CD4-positive, alpha-beta memory T cell (primary cell): ENCODE measurements at regions of chr3 and their contacts with region 1.

Region 1: GRCh38 chr3:115783938-115784738 is 160.8 kb downstream of the GAP43 start:
- DNase-seq: peak; percentile 91 to 96 (median 93)
- H3K4me3 ChIP-seq: peak overlapping the region in 1 of 2 donors; percentile 81
- H3K4me3 Mint-ChIP-seq: peak overlapping the region; percentile 78 to 96 (median 93)
- H3K27ac ChIP-seq: peak overlapping the region; percentile 90
- H3K27ac Mint-ChIP-seq: peak overlapping the region; percentile 76 to 99 (median 98)
- H3K4me1 ChIP-seq: peaks cover 13% of the 10 kb centered on the region
- H3K4me1 Mint-ChIP-seq: peaks cover 10 to 19% (median 10%) of the 10 kb centered on the region in 4 donors
- H3K27me3 ChIP-seq: no peaks in the 10 kb centered on the region
- H3K27me3 Mint-ChIP-seq: no peaks in the 10 kb centered on the region

Region 2: DNA sequence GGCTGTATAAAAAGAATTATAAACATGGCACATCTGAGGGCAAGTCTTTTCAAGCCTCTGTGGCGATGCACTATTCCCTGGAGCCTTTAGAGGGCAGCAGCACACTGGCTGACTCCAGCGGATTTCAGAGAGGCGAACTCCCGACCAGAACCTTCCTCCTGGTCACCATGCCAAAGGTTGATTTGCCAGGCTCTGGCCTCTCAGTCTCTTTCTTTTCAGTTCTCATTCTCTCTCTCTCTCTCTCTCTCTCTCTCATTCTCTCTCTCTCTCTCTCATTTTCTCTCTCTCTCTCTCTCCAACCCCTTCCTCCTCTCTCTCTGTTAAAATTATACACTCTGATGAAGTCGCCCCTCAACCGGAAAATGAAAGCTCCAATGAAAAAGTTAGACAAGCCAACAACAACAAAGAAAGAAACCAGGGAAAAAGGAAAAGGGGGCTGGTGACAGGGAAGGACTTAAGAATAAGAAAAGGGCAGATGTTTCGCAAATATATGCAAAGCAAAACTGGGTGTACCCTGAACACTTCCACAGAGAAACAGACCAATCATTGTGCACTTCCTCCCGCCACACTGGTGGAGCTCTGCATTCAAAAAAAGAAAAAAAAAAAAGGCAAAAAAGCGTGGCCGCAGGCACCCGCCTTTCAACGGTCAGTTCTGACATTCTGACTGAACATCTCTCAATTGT is 1400.1 kb before region 1 on chr3:
- CTCF ChIA-PET with region 1: no interaction called
- POLR2A ChIA-PET with region 1: no interaction called
- intact Hi-C with region 1: loop called (anchors 5 kb)
- DNase-seq: peak; percentile 39 to 50 (median 47)
- H3K4me3 ChIP-seq: peak overlapping the region in 1 of 2 donors; percentile 33
- H3K4me3 Mint-ChIP-seq: peak overlapping the region in 7 of 8 donors; percentile 74 to 89 (median 85)
- H3K27ac ChIP-seq: no peak overlapping the region
- H3K27ac Mint-ChIP-seq: peak overlapping the region in 5 of 7 donors; percentile 38 to 76 (median 61)
- H3K4me1 ChIP-seq: peaks cover 16% of the 10 kb centered on the region
- H3K4me1 Mint-ChIP-seq: peaks cover 8 to 15% (median 12%) of the 10 kb centered on the region in 4 donors
- H3K27me3 ChIP-seq: no peaks in the 10 kb centered on the region
- H3K27me3 Mint-ChIP-seq: no peaks in the 10 kb centered on the region

Region 3: GRCh38 chr3:115169808-115170207 is 614.3 kb before region 1 on chr3:
- CTCF ChIA-PET with region 1: interaction called, 17 read pairs
- POLR2A ChIA-PET with region 1: interaction called, 14 read pairs
- intact Hi-C with region 1: no loop called
- DNase-seq: peak in 4 of 5 donors; percentile 16 to 40 (median 27)
- H3K4me3 ChIP-seq: no peak overlapping the region
- H3K4me3 Mint-ChIP-seq: no peak overlapping the region
- H3K27ac ChIP-seq: no peak overlapping the region
- H3K27ac Mint-ChIP-seq: no peak overlapping the region
- H3K4me1 ChIP-seq: peaks cover 14% of the 10 kb centered on the region
- H3K4me1 Mint-ChIP-seq: peaks cover 12 to 13% (median 12%) of the 10 kb centered on the region in 4 donors
- H3K27me3 ChIP-seq: no peaks in the 10 kb centered on the region
- H3K27me3 Mint-ChIP-seq: no peaks in the 10 kb centered on the region

Region 4: DNA sequence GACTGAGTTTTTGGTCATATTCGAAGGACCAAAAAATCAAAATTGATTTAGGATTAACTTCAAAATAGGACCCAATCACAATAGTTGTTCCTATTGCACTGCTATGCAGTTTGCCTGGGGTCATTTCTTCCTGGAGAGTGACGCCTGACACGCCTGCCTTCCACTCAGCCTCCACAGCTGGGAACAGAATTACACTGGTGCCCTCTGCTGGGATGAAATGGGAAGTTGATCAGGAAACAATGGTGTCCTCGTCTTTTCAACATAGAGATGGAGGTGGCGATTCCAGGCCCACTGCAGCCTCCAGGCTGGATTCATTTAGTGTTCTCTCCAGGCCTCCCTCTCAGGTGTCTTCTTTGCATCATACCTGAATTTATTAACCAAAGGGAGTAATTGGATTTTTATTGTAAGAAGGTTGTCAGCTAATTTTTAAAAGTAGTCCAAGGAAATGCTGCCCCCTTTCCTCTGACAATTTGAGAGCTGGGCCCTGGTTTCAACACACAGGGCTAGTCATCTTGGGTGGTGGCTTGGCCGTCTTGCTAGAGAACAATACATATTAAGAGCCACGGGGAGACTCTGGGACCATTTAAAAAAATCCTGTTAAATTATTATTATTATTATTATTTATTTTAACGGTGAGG is 91.1 kb before region 1 on chr3:
- CTCF ChIA-PET with region 1: interaction called, 8 read pairs
- POLR2A ChIA-PET with region 1: no interaction called
- intact Hi-C with region 1: loop called (anchors 1 kb)
- DNase-seq: peak; percentile 51 to 68 (median 56)
- H3K4me3 ChIP-seq: no peak overlapping the region
- H3K4me3 Mint-ChIP-seq: no peak overlapping the region
- H3K27ac ChIP-seq: no peak overlapping the region
- H3K27ac Mint-ChIP-seq: peak overlapping the region in 1 of 7 donors; percentile 27
- H3K4me1 ChIP-seq: no peaks in the 10 kb centered on the region
- H3K4me1 Mint-ChIP-seq: peaks cover 0 to 3% (median 0%) of the 10 kb centered on the region in 4 donors
- H3K27me3 ChIP-seq: no peaks in the 10 kb centered on the region
- H3K27me3 Mint-ChIP-seq: no peaks in the 10 kb centered on the region

Region 5: GRCh38 chr3:115814778-115815380 is 30.7 kb after region 1 on chr3:
- CTCF ChIA-PET with region 1: interaction called, 11 read pairs
- POLR2A ChIA-PET with region 1: interaction called, 5 read pairs
- intact Hi-C with region 1: loop called (anchors 1 kb)
- DNase-seq: peak; percentile 39 to 57 (median 52)
- H3K4me3 ChIP-seq: no peak overlapping the region
- H3K4me3 Mint-ChIP-seq: no peak overlapping the region
- H3K27ac ChIP-seq: no peak overlapping the region
- H3K27ac Mint-ChIP-seq: no peak overlapping the region
- H3K4me1 ChIP-seq: no peaks in the 10 kb centered on the region
- H3K4me1 Mint-ChIP-seq: no peaks in the 10 kb centered on the region
- H3K27me3 ChIP-seq: no peaks in the 10 kb centered on the region
- H3K27me3 Mint-ChIP-seq: peaks cover 0 to 2% of the 10 kb centered on the region in 2 donors